Cardiac septum (tissue), 1 donor: ENCODE measurements at regions of chr10 and their contacts with region 1.

Region 1: DNA sequence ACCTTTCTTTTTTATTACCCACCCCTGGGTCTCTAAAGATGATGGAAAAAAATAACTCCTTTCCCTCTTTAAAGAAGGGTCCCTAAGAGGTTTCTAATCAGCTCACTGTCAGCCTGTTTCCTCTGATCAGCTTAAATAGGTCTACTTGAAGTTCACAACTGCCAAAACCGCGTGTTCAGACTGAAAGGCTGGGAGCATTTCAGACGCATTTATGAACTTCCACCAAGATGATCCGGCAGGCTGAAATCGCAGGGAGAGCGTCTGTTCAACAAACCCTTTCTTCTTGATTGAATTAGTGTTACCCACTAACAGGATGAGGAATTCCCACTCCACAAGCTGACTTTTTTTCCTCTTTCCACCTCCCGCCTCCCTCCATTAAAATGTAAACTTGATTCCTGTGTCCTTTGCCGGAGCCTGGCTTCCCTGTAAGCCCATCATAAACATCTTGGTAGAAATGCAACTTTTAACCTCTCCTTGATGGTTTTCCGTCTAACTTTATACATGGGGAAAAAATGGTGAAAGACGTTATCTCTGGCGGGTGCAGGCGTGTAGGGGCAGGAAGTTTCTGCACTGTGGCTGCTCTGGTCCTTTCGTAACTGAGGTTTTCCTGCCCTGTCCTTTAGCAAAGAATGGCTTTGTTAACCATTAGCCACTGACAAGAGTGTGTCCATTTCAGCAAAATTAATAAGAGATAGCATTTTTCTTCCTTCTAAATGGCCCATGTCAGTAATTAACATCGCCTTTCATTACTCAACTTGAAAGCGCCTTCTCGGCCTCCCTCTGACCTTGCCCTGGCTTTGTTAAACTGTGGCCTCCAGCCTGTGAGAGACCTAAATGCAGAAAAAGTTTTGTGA is 130.7 kb downstream of the BAMBI start:
- DNase-seq: no peak

Region 2: GRCh38 chr10:28897617-28898464 is 89.9 kb after region 1 on chr10:
- intact Hi-C with region 1: loop called (anchors 5 kb)
- DNase-seq: no peak